ENCODE measurements at regions of chr18 and their contacts with region 1.

Region 1: DNA sequence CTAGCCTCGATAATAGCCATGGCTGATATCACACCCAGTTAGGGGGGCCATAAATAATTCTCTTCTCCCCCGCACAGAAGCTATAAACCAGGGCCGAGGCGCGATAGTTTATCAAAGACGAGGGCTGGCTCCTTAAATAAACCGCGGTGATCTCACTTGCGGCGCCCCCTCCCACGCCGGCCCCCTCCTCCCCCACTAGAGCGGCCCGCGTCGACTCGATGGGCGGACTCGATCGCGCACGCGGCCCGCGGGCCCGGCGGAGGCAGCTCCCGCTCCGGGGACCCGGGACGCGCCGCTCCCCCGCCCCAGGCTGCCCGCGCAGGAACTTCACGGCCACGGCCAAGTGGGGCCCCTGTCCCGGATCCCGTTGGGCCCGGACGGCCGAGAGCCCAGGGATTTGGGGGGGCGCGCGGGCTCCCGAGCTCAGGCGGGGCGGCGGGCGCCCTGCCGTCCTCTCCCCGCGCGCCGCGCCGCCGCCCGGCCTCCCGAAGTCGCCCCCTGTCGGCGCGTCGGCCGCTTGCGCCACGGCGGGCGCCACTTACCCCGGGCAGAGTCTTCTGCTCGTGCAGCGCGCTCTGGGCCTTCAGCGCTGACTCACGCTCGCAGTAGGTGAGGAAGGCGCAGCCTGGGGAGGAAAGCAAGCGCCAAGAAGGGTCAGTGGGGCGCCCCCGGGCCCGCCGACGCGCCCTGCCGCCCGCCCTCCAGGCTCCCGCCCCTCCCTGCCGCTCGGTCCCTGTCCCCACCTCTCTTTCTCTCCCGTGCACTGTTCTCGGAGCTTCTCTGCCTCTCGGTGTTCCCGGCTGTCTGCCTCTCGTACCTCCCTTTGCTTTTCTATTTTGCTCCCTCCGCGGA is 80.4 kb downstream of the CELF4 start:
- DNase-seq: peak; percentile 72
- ATAC-seq: peak; percentile 68
- H3K4me3 Mint-ChIP-seq: peak overlapping the region; percentile 66
- H3K27ac Mint-ChIP-seq: no peak overlapping the region
- H3K4me1 Mint-ChIP-seq: peaks cover 85% of the 10 kb centered on the region
- H3K27me3 Mint-ChIP-seq: peaks cover 37% of the 10 kb centered on the region
- CTCF ChIP-seq: peak; percentile 50; the same call in 1 of the 2 replicates

Region 2: GRCh38 chr18:37464257-37464656 is 21.0 kb before region 1 on chr18:
- CTCF ChIA-PET with region 1: no interaction called
- POLR2A ChIA-PET with region 1: no interaction called
- DNase-seq: no peak
- ATAC-seq: no peak
- H3K4me3 Mint-ChIP-seq: no peak overlapping the region
- H3K27ac Mint-ChIP-seq: no peak overlapping the region
- H3K4me1 Mint-ChIP-seq: peaks cover 9% of the 10 kb centered on the region
- H3K27me3 Mint-ChIP-seq: peaks cover 2% of the 10 kb centered on the region
- CTCF ChIP-seq: no peak

Region 3: GRCh38 chr18:37529863-37530262 is 44.7 kb after region 1 on chr18:
- CTCF ChIA-PET with region 1: interaction called, 22 read pairs
- POLR2A ChIA-PET with region 1: no interaction called
- DNase-seq: no peak
- ATAC-seq: no peak
- H3K4me3 Mint-ChIP-seq: no peak overlapping the region
- H3K27ac Mint-ChIP-seq: no peak overlapping the region
- H3K4me1 Mint-ChIP-seq: peaks cover 38% of the 10 kb centered on the region
- H3K27me3 Mint-ChIP-seq: peaks cover 9% of the 10 kb centered on the region
- CTCF ChIP-seq: no peak

Measured in WTC11 (cell line).